HEK293 (cell line): ENCODE measurements at regions of chr22 and their contacts with region 1.

Region 1: GRCh38 chr22:39532215-39533071 is at the start of gene RPS19BP1:
- H3K4me3 ChIP-seq: peak within 1 kb of the TSS; percentile 75
- H3K27ac ChIP-seq: peak within 1 kb of the TSS; percentile 79
- H3K4me1 ChIP-seq: peaks cover 14% of the 10 kb centered on the region
- CTCF ChIP-seq: peak; percentile 13; the same call in 1 of the 2 replicates

Region 2: DNA sequence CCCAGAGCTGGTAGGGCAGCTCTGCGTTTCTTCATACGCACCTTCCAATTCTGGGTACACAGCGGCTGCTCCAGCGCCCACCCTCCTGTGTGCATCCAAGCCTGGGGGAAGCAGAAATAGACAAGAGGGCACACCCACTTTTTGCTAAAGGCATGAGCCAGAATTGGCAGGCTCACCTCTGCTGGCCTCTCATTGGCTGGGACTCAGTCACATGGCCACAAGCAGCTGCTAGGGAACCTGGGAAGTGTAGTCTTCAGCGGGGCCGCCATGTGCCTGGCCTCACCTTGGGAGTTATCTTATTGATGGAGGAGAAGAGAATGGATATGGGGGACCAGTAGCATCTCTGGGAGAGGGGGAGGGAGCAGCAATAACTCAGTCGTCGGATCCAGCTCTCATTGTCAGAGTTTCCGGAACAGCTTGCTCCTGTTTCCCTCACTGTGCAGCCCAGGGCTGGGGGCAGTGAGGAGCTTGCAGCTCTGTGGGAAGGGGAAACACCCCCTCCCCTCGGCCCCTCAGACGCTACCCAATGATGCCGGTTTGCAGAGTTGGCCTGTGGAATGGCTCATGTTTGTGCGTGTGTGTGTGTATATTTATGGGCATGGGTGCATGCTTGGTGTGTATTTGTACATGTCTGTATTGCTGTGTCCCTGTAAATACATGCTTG is 42.2 kb before region 1 on chr22:
- CTCF ChIA-PET with region 1: interaction called, 380 read pairs
- POLR2A ChIA-PET with region 1: interaction called, 8 read pairs
- H3K4me3 ChIP-seq: no peak overlapping the region
- H3K27ac ChIP-seq: no peak overlapping the region
- H3K4me1 ChIP-seq: no peaks in the 10 kb centered on the region
- CTCF ChIP-seq: no peak

Region 3: DNA sequence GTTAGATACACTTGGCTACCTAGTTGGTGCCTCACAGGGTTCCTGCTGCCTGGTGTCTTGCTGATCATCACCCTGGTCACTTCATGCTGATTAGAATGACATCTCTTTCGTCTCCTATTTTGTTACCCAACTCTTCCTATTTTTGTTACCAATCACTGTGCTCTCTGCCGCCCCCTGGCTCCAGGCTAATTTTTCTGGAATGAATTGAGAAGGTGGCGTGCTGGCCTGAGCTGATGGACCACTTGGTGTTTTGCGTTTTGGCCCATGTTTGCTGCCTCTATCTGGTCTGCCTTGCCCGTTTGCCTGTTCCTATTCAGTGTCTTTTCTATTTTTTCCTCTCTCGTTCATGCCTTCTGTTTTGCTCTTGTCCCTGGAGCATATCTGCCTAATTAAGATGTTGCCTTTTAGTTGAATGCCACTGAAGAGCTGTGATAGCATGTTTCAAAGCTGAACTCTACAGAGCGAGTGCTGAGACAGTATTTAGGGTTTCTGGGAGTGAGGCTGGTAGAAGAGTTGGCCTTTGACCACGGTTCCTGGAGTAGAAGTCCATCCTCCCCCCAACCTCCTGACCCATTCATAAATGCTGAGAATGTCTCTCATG is 18.0 kb before region 1 on chr22:
- CTCF ChIA-PET with region 1: interaction called, 62 read pairs
- POLR2A ChIA-PET with region 1: interaction called, 113 read pairs
- H3K4me3 ChIP-seq: no peak overlapping the region
- H3K27ac ChIP-seq: no peak overlapping the region
- H3K4me1 ChIP-seq: 0 out of 2 replicates have a peak, but pooled peaks cover 5% of the 10 kb centered on the region
- CTCF ChIP-seq: peak; percentile 64

Region 4: DNA sequence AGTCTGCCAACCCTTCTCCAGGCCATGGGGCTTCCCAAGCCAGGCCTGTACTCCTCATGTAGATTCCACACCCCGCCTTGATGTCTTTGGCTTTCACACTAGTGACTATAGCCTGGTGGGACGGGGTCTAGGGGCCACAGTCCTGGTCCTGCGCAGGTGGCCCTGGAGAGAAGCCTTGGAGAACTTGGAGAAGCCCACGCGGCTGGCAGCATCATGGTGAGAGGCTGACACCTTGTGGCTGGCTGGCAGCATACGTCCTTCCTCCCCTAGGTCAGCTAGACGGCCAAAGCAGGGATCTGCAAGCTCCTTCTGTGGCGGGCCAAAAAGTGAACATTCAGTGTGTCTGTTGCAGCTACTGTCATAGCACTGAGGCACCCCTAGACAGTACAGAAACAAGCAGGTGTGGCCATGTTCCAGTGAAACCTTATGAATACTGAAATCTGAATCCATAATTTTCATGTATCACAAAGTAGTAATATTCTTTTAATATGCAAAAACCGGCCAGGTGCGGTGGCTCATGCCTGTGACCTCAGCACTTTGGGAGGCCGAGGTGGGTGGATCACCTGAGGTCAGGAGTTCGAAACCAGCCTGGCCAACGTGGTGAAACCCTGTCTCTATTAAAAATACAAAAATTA is 504.3 kb after region 1 on chr22:
- CTCF ChIA-PET with region 1: interaction called, 68 read pairs
- POLR2A ChIA-PET with region 1: interaction called, 3 read pairs
- H3K4me3 ChIP-seq: no peak overlapping the region
- H3K27ac ChIP-seq: no peak overlapping the region
- H3K4me1 ChIP-seq: peaks cover 16% of the 10 kb centered on the region
- CTCF ChIP-seq: peak; percentile 83

Region 5: DNA sequence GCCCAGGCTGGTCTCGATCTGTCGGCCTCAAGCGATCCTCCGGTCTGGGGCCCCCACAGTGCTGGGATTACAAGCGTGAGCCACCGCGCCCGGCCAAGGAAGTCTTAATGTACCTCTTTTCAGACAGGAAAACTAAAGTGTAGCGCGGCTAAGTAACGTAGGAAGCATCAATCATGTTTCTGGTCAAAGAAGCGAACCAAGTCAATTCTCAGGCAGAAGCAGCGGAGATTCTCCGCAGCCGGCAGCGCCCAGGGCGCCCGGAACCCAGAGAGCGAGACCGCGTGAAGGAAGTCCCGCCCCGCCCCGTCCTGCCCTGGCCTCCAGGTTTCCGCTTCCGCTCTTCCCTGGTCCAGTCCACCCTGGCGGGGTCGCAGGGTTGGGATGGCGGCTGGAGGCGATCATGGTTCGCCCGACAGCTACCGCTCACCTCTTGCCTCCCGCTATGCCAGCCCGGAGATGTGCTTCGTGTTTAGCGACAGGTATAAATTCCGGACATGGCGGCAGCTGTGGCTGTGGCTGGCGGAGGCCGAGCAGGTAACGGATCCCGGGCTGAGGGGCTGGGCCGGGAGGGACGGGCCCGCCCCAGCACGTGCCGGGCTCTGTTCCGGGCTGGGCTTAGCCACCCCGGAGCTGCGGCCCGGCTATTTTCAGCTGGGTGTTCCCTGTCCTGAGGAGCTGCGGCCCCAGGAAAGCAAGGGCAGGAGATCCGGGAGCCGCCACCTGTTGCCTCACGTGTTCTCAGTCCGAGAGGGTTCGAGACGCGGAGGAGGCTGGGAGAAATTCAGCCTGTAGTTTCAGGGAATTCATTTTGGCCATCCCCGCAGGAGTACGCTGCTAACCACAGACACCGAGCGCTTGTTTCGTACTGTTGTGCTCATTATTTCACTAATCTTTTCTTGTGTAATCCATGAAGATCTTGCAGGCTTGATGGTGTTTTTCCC is 814.0 kb after region 1 on chr22 and contains the start of gene ADSL:
- CTCF ChIA-PET with region 1: interaction called, 12 read pairs
- POLR2A ChIA-PET with region 1: no interaction called
- H3K4me3 ChIP-seq: peak within 1 kb of the TSS; percentile 92
- H3K27ac ChIP-seq: peak within 1 kb of the TSS; percentile 92
- H3K4me1 ChIP-seq: peaks cover 5% of the 10 kb centered on the region; the same call in 1 of the 2 replicates
- CTCF ChIP-seq: peak; percentile 57; the same call in 1 of the 2 replicates